ENCODE measurements at regions of chr1 and their contacts with region 1.

Region 1: DNA sequence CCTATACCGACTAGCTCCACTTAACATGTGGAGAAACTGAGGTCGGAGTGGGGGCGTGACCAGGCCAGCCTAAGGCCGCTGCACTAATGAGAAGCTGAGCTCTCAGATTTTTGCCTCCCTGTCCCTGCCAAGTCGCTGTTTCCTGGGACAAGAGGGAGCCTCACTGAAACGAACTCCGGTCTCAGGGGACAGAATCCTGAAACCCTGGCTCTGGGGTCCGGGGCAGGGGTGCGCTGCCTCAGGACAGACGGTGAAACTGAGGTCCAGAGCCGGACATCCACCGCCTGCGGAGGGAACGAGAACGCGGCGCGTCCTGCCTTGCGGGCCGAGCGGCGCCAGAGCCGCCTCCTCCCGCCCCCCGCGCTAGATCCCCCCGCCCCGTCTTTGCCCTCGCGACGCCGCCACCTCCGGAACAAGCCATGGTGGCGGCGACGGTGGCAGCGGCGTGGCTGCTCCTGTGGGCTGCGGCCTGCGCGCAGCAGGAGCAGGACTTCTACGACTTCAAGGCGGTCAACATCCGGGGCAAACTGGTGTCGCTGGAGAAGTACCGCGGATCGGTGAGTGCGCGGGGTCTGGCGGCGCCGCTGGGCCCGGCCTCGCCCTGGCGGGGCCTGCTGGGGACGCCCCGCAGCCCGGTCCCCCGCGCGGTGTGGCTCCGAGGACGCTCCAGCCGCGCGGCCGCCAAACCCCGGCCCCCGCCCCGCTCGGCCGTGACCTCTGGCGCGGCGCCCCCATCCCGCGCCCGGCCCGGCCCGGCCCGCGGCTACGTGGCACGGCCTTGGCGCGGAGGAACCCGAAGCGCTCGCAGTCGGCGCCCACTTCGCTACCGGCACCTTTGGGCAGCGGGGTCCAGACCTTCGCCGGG is at the start of gene GPX7:
- DNase-seq: peak; percentile 43 to 82 (median 64)
- ATAC-seq: peak; percentile 83 to 86
- H3K4me3 Mint-ChIP-seq: peak within 1 kb of the TSS; percentile 72 to 92 (median 89)
- H3K27ac Mint-ChIP-seq: peak within 1 kb of the TSS; percentile 84 to 97 (median 96)
- H3K4me1 Mint-ChIP-seq: peaks cover 26 to 55% (median 53%) of the 10 kb centered on the region in 4 donors
- H3K27me3 Mint-ChIP-seq: no peaks in the 10 kb centered on the region
- polyA plus RNA-seq, gene GPX7: 30.2 to 34.5 (median 30.3) TPM

Region 2: DNA sequence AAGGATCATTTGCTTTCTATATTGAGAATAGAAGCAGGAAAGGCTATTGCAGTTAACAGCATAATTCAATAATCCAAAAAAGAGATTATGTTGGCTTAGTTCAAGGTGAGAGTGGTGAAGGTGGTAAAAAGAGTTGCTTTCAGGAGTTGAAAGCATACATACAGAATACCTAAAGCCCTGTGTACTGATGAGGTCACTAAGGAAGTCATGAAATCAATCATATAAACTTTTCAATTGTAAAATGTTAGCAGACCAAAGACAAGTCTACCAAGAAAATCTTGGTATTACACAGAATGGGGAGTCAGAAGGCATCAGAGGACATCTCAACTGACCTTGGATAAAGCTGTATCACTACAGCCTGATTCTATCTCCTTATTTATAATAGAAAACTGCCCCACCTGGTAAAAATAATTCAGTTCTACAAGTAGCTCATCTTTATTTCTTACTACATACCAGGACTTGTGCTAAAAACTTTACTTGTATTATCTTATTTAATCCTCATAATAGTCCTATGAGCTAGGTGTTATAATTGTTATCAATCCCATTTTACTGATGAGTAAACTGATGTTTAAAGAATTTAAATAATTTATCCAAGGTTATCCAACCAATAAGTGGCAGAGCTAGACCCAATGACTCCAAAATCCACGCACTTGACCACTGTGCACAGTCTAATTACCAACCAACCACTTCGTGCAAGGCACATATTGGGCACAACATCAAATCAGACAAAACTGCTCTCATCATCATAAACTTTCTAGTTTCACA is 90.2 kb before region 1 on chr1:
- POLR2A ChIA-PET with region 1: no interaction called
- DNase-seq: no peak
- ATAC-seq: no peak
- H3K4me3 Mint-ChIP-seq: no peak overlapping the region
- H3K27ac Mint-ChIP-seq: no peak overlapping the region
- H3K4me1 Mint-ChIP-seq: peaks cover 2 to 9% (median 6%) of the 10 kb centered on the region in 4 donors
- H3K27me3 Mint-ChIP-seq: no peaks in the 10 kb centered on the region

Region 3: GRCh38 chr1:52552505-52553361 is 49.5 kb before region 1 on chr1 and contains the start of gene TUT4:
- POLR2A ChIA-PET with region 1: interaction called, 19 read pairs
- DNase-seq: peak in 7 of 10 donors; percentile 61 to 88 (median 70)
- ATAC-seq: peak; percentile 51 to 55
- H3K4me3 Mint-ChIP-seq: peak within 1 kb of the TSS in 8 of 10 donors; percentile 62 to 86 (median 78)
- H3K27ac Mint-ChIP-seq: peak within 1 kb of the TSS; percentile 72 to 95 (median 87)
- H3K4me1 Mint-ChIP-seq: peaks cover 21 to 40% (median 38%) of the 10 kb centered on the region in 4 donors
- H3K27me3 Mint-ChIP-seq: no peaks in the 10 kb centered on the region
- polyA plus RNA-seq, gene TUT4: 31.6 to 40.9 (median 32.7) TPM

Region 4: DNA sequence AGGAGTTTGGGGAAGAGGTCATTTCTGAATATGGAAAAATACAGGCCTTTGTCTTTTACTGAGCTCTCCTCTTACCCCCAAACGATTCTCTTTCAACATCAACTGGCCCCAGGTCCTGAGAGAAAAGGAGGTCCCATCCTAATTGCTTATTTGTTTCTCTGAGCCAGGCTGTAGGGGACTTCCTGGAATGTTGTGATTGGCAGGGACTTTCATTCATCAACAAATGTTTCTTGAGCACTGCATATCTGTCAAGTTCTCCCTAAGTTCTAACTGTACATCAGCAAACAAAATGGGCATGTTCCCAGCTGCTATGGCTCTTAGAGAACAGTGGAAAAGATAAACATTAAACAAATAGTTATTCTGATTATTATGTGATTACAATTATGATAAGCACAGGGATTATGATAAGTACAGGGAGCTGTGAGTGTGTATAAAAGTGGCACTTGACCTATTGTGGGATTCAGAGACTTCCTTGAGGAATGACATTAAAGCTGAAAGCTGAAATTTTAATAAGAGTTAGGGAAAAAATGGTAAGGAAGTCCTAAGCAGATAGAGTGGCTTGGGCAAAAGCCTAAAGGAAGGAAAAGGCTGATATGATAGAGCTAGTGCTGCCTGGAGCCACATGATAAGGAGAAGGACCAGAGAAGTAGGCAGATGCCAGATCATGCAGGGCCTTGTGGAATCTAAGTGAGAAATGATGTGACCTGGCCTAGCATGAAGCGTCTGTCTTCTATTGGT is 11.6 kb after region 1 on chr1:
- POLR2A ChIA-PET with region 1: interaction called, 18 read pairs
- DNase-seq: no peak
- ATAC-seq: no peak
- H3K4me3 Mint-ChIP-seq: peak overlapping the region in 1 of 10 donors; percentile 1
- H3K27ac Mint-ChIP-seq: peak overlapping the region; percentile 18 to 90 (median 48)
- H3K4me1 Mint-ChIP-seq: peaks cover 14 to 49% (median 34%) of the 10 kb centered on the region in 4 donors
- H3K27me3 Mint-ChIP-seq: no peaks in the 10 kb centered on the region

Measured in naive thymus-derived CD8-positive, alpha-beta T cell (primary cell).